Activated naive CD4-positive, alpha-beta T cell treated with anti-CD3 and anti-CD28 coated beads for 36 hours (primary cell): ENCODE measurements at regions of chr17 and their contacts with region 1.

Region 1: DNA sequence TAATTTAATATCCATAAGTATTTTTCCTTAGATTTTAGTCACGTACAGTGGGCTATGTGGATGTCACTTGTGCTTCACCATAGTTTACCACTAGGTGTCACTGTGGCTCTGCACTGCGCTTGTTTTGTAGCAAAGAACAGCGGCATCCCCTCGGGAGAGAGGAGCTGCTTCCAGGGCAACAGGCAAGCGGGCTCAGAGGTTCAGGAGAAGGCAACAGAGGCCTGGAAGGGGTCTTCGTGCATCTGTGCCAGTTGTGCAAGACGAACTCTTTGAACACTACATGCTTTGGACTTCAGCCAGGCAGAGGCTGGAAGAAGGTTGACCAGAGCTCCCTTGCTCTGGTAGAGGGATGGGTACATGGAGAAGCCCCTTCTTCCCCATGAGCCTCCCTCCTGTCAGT is 20.6 kb downstream of the CYB561 start:
- DNase-seq: peak; percentile 85
- H3K4me3 Mint-ChIP-seq: no peak overlapping the region
- H3K27ac Mint-ChIP-seq: no peak overlapping the region
- H3K4me1 Mint-ChIP-seq: peaks cover 21% of the 10 kb centered on the region
- H3K27me3 Mint-ChIP-seq: no peaks in the 10 kb centered on the region

Region 2: GRCh38 chr17:63413128-63413527 is 12.4 kb before region 1 on chr17:
- CTCF ChIA-PET with region 1: interaction called, 19 read pairs
- intact Hi-C with region 1: no loop called
- DNase-seq: no peak
- H3K4me3 Mint-ChIP-seq: no peak overlapping the region
- H3K27ac Mint-ChIP-seq: no peak overlapping the region
- H3K4me1 Mint-ChIP-seq: no peaks in the 10 kb centered on the region
- H3K27me3 Mint-ChIP-seq: no peaks in the 10 kb centered on the region

Region 3: GRCh38 chr17:63453031-63453461 is 27.6 kb after region 1 on chr17:
- CTCF ChIA-PET with region 1: interaction called, 10 read pairs
- intact Hi-C with region 1: no loop called
- DNase-seq: no peak
- H3K4me3 Mint-ChIP-seq: no peak overlapping the region
- H3K27ac Mint-ChIP-seq: no peak overlapping the region
- H3K4me1 Mint-ChIP-seq: peaks cover 6% of the 10 kb centered on the region
- H3K27me3 Mint-ChIP-seq: no peaks in the 10 kb centered on the region

Region 4: GRCh38 chr17:63478791-63479494 is 53.5 kb after region 1 on chr17:
- CTCF ChIA-PET with region 1: interaction called, 138 read pairs
- intact Hi-C with region 1: loop called (anchors 1 kb)
- DNase-seq: peak; percentile 87
- H3K4me3 Mint-ChIP-seq: no peak overlapping the region
- H3K27ac Mint-ChIP-seq: no peak overlapping the region
- H3K4me1 Mint-ChIP-seq: peaks cover 5% of the 10 kb centered on the region
- H3K27me3 Mint-ChIP-seq: peaks cover 34% of the 10 kb centered on the region

Region 5: GRCh38 chr17:63714547-63715277 is 289.2 kb after region 1 on chr17:
- CTCF ChIA-PET with region 1: interaction called, 15 read pairs
- intact Hi-C with region 1: loop called (anchors 1 kb)
- DNase-seq: no peak
- H3K4me3 Mint-ChIP-seq: no peak overlapping the region
- H3K27ac Mint-ChIP-seq: no peak overlapping the region
- H3K4me1 Mint-ChIP-seq: peaks cover 10% of the 10 kb centered on the region
- H3K27me3 Mint-ChIP-seq: no peaks in the 10 kb centered on the region

Region 6: GRCh38 chr17:63834431-63835166 is 409.1 kb after region 1 on chr17:
- CTCF ChIA-PET with region 1: interaction called, 3 read pairs
- intact Hi-C with region 1: loop called (anchors 1 kb)
- DNase-seq: peak; percentile 82
- H3K4me3 Mint-ChIP-seq: no peak overlapping the region
- H3K27ac Mint-ChIP-seq: peak overlapping the region; percentile 77
- H3K4me1 Mint-ChIP-seq: peaks cover 55% of the 10 kb centered on the region
- H3K27me3 Mint-ChIP-seq: no peaks in the 10 kb centered on the region